AG04449 (cell line): ENCODE measurements at regions of chr5 and their contacts with region 1.

Region 1: GRCh38 chr5:73312146-73312871 is 136.3 kb downstream of the FOXD1 start:
- DNase-seq: peak; percentile 97
- H3K4me3 ChIP-seq: no peak overlapping the region
- CTCF ChIP-seq: peak; percentile 77

Region 2: DNA sequence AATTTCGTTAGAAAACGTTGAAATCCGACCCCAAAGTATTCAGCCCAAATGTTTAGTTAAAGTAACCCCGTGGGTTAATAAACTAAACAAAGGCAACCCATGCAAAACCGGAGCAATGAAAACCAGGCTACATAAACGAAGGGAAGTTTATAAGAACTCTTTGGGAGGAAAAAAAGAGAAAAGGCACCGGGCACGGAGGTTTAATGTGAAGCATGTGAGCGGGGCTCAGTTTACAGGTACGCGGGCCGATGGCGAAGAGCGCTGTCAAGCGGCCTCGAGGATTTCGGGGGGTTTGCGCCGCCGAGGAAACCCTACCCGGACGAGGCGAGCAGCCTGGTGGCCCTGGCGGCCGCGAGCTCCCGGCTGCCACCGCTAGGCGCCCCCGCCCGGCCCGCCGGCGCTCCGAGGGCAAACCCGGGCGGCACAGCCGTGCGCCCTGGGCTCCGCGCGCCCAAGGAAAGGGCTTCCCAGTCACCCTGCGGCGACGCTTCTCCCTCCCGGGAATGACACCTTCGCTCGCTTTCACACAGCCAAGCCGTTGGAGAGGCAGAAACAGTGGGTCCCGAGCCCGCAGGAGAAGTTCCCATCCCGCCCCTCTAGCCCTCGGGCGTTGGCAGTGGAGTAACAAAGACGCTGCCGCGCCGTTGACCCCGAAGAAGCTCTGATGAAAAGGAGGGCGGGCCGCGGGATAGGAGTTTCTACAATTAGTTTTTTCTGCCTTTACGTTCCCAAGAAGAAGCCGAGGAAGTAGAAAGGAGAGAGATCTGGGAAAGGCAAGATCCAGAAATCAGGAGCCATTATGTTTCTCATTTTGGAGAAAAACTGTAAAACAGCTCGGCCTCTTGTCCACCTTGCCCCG is 13.3 kb before region 1 on chr5:
- CTCF ChIA-PET with region 1: interaction called, 53 read pairs
- POLR2A ChIA-PET with region 1: no interaction called
- DNase-seq: no peak
- H3K4me3 ChIP-seq: peak overlapping the region; percentile 45
- CTCF ChIP-seq: no peak

Region 3: GRCh38 chr5:73419465-73420390 is 107.4 kb after region 1 on chr5:
- CTCF ChIA-PET with region 1: interaction called, 13 read pairs
- POLR2A ChIA-PET with region 1: no interaction called
- DNase-seq: no peak
- H3K4me3 ChIP-seq: peak overlapping the region; percentile 34
- CTCF ChIP-seq: no peak

Region 4: GRCh38 chr5:73437101-73437776 is 124.9 kb after region 1 on chr5:
- CTCF ChIA-PET with region 1: interaction called, 43 read pairs
- POLR2A ChIA-PET with region 1: interaction called, 8 read pairs
- DNase-seq: no peak
- H3K4me3 ChIP-seq: peak overlapping the region; percentile 55
- CTCF ChIP-seq: peak; percentile 66

Region 5: DNA sequence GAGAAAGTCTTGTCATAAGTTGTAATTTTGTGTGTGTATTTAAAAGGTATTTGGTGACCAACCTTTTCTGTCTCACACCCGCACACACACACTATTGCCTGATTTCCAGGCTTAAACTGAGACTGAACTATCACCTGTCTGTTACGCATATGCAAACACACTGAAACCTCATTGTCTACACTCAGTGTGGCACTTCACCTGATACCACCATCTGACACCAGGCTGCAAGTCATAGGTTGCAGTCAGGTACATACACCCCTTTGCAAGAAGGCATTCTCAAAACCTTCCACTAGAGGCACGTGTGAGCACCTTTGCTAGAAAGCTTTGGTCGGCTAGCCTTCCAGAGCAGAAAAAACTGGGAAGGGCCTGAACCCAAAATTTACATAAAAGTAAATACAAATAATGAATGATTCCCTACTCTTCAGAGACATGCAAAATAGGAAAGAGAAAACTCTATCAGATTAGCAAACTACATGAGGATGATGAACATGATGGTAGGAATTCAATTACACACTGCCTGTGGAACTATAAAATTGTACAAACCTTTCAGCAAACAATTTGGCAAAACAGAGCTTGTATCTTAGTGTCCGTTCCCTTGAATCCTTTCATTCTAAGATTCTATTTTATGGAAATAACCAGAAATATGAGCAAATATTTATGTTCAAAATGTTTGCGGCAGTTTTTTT is 142.2 kb after region 1 on chr5:
- CTCF ChIA-PET with region 1: interaction called, 72 read pairs
- POLR2A ChIA-PET with region 1: interaction called, 3 read pairs
- DNase-seq: no peak
- H3K4me3 ChIP-seq: no peak overlapping the region
- CTCF ChIP-seq: peak; percentile 77

Region 6: DNA sequence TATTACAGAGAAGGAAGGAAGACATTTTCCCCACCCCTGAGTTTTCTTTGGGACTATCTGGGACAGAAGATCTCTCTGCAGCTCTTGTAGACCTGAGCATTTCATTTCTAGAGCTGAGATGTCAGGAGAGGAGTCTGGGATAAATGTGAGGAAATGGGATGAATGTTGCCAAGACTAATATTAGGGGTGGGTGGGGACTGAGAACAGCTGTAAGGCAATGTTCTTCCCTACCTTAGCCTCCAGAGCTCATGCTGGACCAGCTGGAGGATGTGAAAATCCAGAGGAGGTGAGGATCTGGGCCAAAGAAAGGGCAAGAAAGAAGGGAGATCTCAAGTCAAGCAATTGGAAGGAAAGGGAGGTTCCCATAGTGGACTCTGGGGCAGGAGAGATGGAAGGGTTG is 159.3 kb after region 1 on chr5:
- CTCF ChIA-PET with region 1: no interaction called
- POLR2A ChIA-PET with region 1: no interaction called
- DNase-seq: no peak
- H3K4me3 ChIP-seq: no peak overlapping the region
- CTCF ChIP-seq: no peak